ENCODE measurements at regions of chr2 and their contacts with region 1.

Region 1: DNA sequence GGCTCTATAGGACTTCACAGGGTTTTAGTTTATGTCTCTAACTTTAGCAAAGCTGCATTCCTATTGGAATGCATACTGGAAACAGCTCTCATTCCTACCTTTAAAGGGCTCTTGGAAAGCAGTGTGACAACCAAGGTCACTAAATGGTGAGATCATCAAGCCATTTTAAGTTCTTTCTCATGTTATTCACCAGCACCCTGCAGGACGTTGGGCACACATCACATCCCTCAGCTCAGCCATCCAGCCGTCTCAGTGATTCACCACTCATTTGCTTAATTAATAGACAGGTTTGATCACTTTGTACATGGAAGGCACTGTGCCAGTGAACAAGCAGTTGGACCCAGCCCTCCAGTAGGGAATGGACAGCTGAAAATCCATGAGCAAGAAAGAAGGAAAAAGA is 32.2 kb upstream of the RBM44 start:
- DNase-seq: no peak
- ATAC-seq: no peak
- H3K4me3 ChIP-seq: no peak overlapping the region
- H3K27ac ChIP-seq: no peak overlapping the region
- H3K4me1 ChIP-seq: no peaks in the 10 kb centered on the region
- H3K27me3 ChIP-seq: no peaks in the 10 kb centered on the region
- CTCF ChIP-seq: no peak
- EP300 ChIP-seq: no peak
- POLR2A ChIP-seq: no peak
- RAD21 ChIP-seq: no peak

Region 2: GRCh38 chr2:236981701-236982485 is 784.4 kb before region 1 on chr2:
- CTCF ChIA-PET with region 1: no interaction called
- POLR2A ChIA-PET with region 1: interaction called, 10 read pairs
- RAD21 ChIA-PET with region 1: no interaction called
- SMC1A ChIA-PET with region 1: no interaction called
- in situ Hi-C with region 1: no loop called
- intact Hi-C with region 1: no loop called
- DNase-seq: no peak
- ATAC-seq: no peak
- H3K4me3 ChIP-seq: no peak overlapping the region
- H3K27ac ChIP-seq: no peak overlapping the region
- H3K4me1 ChIP-seq: no peaks in the 10 kb centered on the region
- H3K27me3 ChIP-seq: peaks cover 0 to 2% of the 10 kb centered on the region in 2 experiments; a peak in 1 of 4 replicates
- CTCF ChIP-seq: no peak
- EP300 ChIP-seq: no peak
- POLR2A ChIP-seq: no peak
- RAD21 ChIP-seq: no peak

Region 3: DNA sequence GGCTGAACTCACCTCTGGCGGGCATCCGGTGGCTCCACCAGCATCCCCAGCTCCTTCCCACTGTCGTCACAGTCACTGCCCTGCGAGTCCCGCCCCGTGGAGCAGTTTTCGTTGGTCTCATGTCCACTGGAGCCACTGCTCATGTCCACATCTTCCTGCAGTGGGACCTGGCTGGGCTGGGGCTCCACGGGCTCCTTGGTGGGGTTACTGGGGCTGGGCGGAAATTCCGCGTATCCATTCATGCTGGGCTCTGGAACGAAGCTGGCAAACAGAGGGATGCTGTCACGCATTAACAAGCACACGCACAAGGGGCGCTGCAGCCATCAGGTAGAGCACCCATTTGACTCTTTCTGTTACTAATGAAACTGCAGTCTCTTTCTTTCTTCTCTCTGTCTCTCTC is 511.4 kb after region 1 on chr2:
- CTCF ChIA-PET with region 1: no interaction called
- POLR2A ChIA-PET with region 1: no interaction called
- RAD21 ChIA-PET with region 1: no interaction called
- SMC1A ChIA-PET with region 1: no interaction called
- in situ Hi-C with region 1: no loop called
- intact Hi-C with region 1: no loop called
- DNase-seq: no peak
- ATAC-seq: no peak
- H3K4me3 ChIP-seq: no peak overlapping the region
- H3K27ac ChIP-seq: no peak overlapping the region
- H3K4me1 ChIP-seq: no peaks in the 10 kb centered on the region
- H3K27me3 ChIP-seq: no peaks in the 10 kb centered on the region
- CTCF ChIP-seq: no peak
- EP300 ChIP-seq: no peak
- POLR2A ChIP-seq: no peak
- RAD21 ChIP-seq: no peak